ENCODE measurements at regions of chr5 and their contacts with region 1.

Region 1: GRCh38 chr5:173283318-173284288 is 44.6 kb downstream of the STC2 start:
- H3K4me3 ChIP-seq: no peak overlapping the region; the same call in 1 of the 2 replicates
- H3K27ac ChIP-seq: no peak overlapping the region
- H3K4me1 ChIP-seq: no peaks in the 10 kb centered on the region
- CTCF ChIP-seq: peak; percentile 94

Region 2: DNA sequence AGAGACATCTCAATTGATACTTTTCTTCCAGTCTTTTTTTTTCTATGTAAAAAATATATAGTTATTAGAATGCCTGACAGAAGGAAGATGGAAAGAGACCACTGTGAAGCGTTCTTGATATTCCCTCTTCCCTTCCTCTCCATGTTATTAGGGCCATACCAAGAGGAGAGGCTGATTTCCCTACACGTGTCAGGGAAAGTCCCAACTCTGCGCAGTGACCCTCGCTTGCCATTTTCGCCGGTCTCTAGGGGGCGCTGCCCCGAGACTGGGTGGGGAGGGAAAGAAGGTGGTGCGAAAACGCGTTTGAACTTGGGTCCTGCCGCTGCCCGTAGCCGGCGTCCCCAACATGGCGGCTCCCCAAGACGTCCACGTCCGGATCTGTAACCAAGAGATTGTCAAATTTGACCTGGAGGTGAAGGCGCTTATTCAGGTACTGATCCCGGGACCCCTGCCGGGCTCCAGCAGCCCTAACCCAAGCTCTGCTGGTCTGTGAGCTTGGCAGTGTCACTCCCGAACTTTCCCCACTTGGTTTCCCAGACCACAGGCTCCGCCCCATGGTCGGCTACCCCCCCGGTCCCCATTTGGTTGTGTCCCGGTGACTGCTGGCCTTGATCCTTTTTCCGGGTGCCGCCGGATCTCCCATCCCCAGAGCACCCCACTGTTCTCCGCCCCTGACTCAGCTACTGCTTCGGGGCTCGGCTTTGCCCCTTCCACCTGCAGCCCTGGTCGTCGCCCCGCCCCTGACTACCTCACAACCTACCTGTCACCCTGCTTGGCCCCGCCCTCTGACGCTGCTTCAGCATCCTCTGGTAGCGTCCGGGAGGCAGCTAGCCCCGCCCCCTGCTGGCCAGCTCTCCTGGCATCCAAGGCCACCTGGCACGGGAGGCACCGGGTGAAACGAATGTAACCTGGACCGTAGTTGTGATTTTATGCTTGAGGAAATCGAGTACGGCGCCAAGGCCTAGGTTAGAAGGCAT is 139.1 kb before region 1 on chr5 and contains the start of gene BNIP1:
- CTCF ChIA-PET with region 1: interaction called, 3 read pairs
- POLR2A ChIA-PET with region 1: interaction called, 11 read pairs
- H3K4me3 ChIP-seq: peak within 1 kb of the TSS; percentile 92
- H3K27ac ChIP-seq: peak within 1 kb of the TSS; percentile 29; the same call in 1 of the 2 replicates
- H3K4me1 ChIP-seq: no peaks in the 10 kb centered on the region
- CTCF ChIP-seq: peak; percentile 94

Region 3: DNA sequence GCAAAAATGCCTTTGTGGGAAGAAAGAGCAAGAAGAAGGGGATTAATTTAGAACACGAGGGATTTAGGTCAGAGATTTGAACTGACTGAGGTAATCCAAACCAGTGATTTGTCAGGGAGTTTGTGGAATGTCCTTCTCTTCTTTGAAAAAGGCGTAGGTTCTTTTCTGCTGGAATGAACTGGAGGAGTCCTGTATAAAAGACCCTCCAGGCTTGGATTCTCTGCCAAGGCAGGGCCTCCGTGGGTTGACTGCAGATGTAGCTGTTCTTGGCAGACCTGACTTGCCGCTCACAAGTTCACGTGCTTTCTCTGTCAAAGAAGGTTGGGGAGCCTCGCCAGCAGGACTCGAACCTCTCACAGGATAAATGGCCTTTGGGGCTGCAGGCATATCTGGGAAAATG is 107.4 kb after region 1 on chr5:
- CTCF ChIA-PET with region 1: no interaction called
- POLR2A ChIA-PET with region 1: no interaction called
- H3K4me3 ChIP-seq: no peak overlapping the region
- H3K27ac ChIP-seq: no peak overlapping the region
- H3K4me1 ChIP-seq: no peaks in the 10 kb centered on the region
- CTCF ChIP-seq: no peak

Measured in HEK293 (cell line).